ENCODE measurements at regions of chr15 and their contacts with region 1.

Region 1: DNA sequence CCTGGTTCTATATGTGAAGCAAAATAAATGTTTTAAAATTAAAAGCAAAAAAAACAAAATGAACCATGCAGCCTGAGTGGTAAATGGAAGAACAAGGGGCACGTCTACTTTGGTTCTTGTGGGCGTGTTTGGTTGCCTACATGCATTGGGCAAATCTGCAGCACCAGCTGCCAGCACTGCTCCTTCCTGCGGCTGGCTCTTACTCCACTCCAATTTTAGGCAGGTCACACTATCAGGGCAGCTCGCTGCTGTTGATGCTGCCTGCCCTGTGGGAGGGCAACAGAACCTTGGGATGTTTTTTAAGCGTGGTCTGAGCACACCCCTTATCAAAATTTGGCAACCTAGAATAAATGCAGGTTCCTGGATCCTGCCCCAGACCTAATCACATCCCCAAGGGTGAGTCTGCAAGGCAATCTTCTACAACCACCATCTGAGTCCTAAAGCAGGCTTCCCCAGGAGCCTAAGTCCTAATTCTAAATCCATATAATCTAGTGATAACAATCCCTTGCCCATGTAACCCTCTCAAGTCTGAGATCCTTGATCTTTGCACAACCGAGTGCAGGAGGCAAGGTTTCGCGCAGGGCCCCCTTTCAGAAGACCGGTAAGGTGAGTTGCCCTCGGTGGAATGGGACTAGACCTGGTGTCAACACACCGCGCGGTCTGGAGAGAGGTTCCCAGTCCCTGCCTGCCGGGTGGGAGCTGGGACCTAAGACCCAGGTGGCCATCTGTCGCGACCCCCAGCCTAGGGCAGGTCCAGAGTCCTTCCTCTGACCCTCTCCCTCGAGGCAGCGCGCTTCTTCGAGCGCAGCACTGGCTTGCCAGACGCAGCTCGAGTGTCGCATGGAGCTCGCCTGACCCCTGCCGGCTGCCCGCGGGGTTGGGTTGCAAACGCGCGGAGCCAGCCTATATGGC is 15.9 kb downstream of the IVD start:
- DNase-seq: peak; percentile 88
- H3K4me3 Mint-ChIP-seq: no peak overlapping the region
- H3K27ac Mint-ChIP-seq: no peak overlapping the region
- H3K4me1 Mint-ChIP-seq: no peaks in the 10 kb centered on the region
- H3K27me3 Mint-ChIP-seq: peaks cover 10% of the 10 kb centered on the region

Region 2: GRCh38 chr15:40372981-40373380 is 48.5 kb before region 1 on chr15:
- CTCF ChIA-PET with region 1: interaction called, 34 read pairs
- DNase-seq: no peak
- H3K4me3 Mint-ChIP-seq: no peak overlapping the region
- H3K27ac Mint-ChIP-seq: no peak overlapping the region
- H3K4me1 Mint-ChIP-seq: peaks cover 5% of the 10 kb centered on the region
- H3K27me3 Mint-ChIP-seq: peaks cover 65% of the 10 kb centered on the region